ENCODE measurements at regions of chr1 and their contacts with region 1.

Region 1: GRCh38 chr1:159798893-159799292 is 3.3 kb upstream of the FCRL6 start:
- DNase-seq: peak; percentile 66
- ATAC-seq: peak; percentile 99
- H3K4me3 Mint-ChIP-seq: no peak overlapping the region
- H3K27ac Mint-ChIP-seq: no peak overlapping the region
- H3K4me1 Mint-ChIP-seq: no peaks in the 10 kb centered on the region
- H3K27me3 Mint-ChIP-seq: peaks cover 3% of the 10 kb centered on the region
- CTCF ChIP-seq: peak; percentile 48

Region 2: GRCh38 chr1:159664247-159664646 is 134.6 kb before region 1 on chr1:
- CTCF ChIA-PET with region 1: no interaction called
- POLR2A ChIA-PET with region 1: no interaction called
- DNase-seq: no peak
- ATAC-seq: no peak
- H3K4me3 Mint-ChIP-seq: no peak overlapping the region
- H3K27ac Mint-ChIP-seq: no peak overlapping the region
- H3K4me1 Mint-ChIP-seq: no peaks in the 10 kb centered on the region
- H3K27me3 Mint-ChIP-seq: no peaks in the 10 kb centered on the region
- CTCF ChIP-seq: no peak

Region 3: GRCh38 chr1:159821171-159821867 is 22.4 kb after region 1 on chr1:
- CTCF ChIA-PET with region 1: interaction called, 16 read pairs
- POLR2A ChIA-PET with region 1: no interaction called
- DNase-seq: peak; percentile 25
- ATAC-seq: peak; percentile 68
- H3K4me3 Mint-ChIP-seq: no peak overlapping the region
- H3K27ac Mint-ChIP-seq: no peak overlapping the region
- H3K4me1 Mint-ChIP-seq: peaks cover 15% of the 10 kb centered on the region
- H3K27me3 Mint-ChIP-seq: peaks cover 11% of the 10 kb centered on the region
- CTCF ChIP-seq: no peak

Region 4: GRCh38 chr1:159839116-159839849 is 40.4 kb after region 1 on chr1:
- CTCF ChIA-PET with region 1: interaction called, 41 read pairs
- POLR2A ChIA-PET with region 1: no interaction called
- DNase-seq: no peak
- ATAC-seq: no peak
- H3K4me3 Mint-ChIP-seq: no peak overlapping the region
- H3K27ac Mint-ChIP-seq: no peak overlapping the region
- H3K4me1 Mint-ChIP-seq: peaks cover 9% of the 10 kb centered on the region
- H3K27me3 Mint-ChIP-seq: no peaks in the 10 kb centered on the region; the same call in 1 of the 2 replicates
- CTCF ChIP-seq: no peak

Region 5: GRCh38 chr1:159869173-159869572 is 70.3 kb after region 1 on chr1:
- CTCF ChIA-PET with region 1: interaction called, 14 read pairs
- POLR2A ChIA-PET with region 1: no interaction called
- DNase-seq: no peak
- ATAC-seq: no peak
- H3K4me3 Mint-ChIP-seq: no peak overlapping the region
- H3K27ac Mint-ChIP-seq: no peak overlapping the region
- H3K4me1 Mint-ChIP-seq: peaks cover 4% of the 10 kb centered on the region
- H3K27me3 Mint-ChIP-seq: no peaks in the 10 kb centered on the region; the same call in 1 of the 2 replicates
- CTCF ChIP-seq: no peak

Region 6: DNA sequence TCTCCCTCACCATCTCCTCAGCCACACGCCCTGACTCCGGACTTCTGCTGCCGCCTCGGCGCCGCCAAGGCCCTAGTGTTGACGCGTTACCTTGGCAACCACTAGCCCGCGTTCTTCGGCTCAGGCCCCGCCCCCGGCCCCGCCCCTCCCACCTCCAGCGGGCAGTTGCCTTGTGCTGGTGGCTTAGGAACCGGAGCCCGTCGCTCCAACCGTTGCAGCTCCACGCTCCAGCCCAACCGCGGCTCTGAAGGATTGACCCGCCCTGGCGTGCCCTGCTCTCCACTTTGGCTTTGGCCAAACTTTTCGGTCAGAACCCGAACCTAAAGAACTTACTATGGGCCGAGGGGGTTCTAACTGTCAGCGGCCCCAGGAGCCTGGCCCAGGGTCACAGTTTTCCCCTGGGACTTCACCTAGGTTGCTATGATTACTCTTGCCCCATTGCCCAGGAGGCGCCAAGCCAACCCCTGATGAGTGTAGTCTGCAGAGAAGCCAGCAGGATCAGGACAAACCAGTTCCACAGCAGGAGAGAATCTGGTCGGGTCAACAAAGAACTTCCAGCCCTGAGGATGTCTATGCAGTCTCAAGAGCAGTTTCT is 101.3 kb after region 1 on chr1 and contains the start of gene CFAP45:
- CTCF ChIA-PET with region 1: interaction called, 10 read pairs
- POLR2A ChIA-PET with region 1: no interaction called
- DNase-seq: peak; percentile 92
- ATAC-seq: peak; percentile 96
- H3K4me3 Mint-ChIP-seq: peak within 1 kb of the TSS; percentile 55
- H3K27ac Mint-ChIP-seq: peak within 1 kb of the TSS; percentile 1; the same call in 1 of the 2 replicates
- H3K4me1 Mint-ChIP-seq: peaks cover 15% of the 10 kb centered on the region
- H3K27me3 Mint-ChIP-seq: peaks cover 31% of the 10 kb centered on the region
- CTCF ChIP-seq: no peak
- total RNA-seq, gene CFAP45: 0.27 to 0.48 TPM (median 0.48 TPM) in 3 replicates

Measured in WTC11 (cell line).